ENCODE measurements at regions of chr5 and their contacts with region 1.

Region 1: DNA sequence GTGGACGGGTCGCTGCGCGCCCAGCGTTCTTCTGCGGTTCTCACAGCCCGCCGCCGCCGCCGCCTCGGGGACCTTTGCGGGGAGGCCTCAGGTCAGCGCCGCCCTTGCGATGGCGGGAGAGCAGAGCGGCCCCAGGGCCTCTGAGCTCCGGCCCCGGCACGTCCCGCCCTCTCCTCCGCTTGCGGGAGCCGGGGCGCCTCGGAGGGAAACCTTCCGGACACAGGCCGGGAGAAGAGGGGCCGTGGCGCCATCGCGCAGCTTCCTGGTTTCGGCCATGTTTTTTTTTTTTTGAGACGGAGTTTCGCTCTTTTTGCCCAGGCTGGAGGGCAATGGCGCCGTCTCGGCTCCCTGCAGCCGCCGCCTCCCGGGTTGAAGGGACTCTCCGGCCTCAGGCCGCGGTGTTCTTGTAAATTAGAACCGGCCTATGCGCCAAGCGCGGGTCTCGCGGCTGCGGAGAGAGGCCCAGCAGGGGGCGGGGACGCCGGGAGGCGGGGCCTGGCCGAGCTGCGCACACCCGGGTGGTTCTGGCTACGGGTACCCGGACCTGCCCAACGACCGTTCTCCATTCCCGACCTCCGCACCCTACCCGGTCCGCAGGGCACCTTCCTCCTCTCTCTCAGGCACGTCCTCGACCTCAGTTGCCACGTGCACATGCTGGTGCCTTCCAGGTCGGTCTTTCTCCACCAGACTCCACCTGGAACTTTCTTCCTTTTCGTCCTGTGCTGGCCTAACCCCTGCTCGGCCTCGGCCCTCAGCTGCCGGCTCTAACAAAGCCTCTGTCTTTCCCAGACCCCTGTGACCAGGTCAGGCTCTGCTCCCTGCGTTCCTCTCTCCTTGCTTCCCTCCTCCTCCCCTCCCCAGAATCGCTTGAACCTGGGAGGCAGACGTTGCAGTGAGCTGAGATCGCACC is 28.8 kb upstream of the MGAT1 start:
- DNase-seq: peak; percentile 75
- H3K4me3 Mint-ChIP-seq: peak overlapping the region; percentile 92
- H3K27ac Mint-ChIP-seq: peak overlapping the region; percentile 96
- H3K4me1 Mint-ChIP-seq: peaks cover 40% of the 10 kb centered on the region
- H3K27me3 Mint-ChIP-seq: no peaks in the 10 kb centered on the region

Region 2: DNA sequence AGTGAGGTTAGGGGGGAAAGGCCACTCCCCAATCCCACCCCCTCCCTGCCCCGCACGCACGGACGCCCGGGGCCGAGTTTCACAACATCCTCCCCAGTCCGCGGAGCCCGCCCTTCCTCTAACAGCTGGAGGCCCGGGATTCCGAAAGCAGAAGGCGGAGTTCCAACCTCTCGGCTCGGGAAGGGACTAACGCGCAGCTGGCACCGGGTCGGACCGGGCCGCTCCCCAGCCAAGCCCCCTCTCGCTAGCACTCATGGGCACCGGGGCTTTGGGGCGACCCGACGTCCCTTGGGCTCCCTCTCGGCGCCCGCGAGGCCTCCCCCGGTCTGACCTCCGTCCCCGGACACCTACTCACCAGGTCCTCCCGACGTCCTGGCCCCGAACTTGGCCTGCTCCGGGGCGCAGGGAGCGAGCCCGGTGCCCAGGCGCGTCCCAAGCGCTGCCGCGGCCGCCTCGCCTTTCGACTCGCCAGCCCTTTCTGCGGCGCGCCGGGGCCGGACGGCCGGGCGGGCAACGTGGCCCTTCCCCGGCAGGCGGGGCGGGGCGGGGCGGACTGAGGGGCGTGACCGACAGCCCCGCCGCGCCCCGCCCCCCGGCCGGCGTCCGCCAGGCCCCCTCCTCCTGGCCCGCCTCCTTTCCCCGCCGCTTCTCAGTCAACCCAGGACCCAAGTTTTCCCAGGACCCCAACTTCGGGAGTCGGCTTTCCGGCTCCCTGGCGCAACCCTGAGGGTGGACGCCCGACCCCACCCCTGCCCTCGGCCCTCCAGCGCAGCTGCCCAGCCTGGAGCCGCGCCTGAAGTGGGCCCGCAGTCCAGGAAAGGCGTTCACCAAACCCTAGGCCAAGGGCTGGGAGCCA is 28.8 kb before region 1 on chr5 and contains the start of gene MGAT1:
- CTCF ChIA-PET with region 1: interaction called, 14 read pairs
- POLR2A ChIA-PET with region 1: interaction called, 3 read pairs
- DNase-seq: peak; percentile 79
- H3K4me3 Mint-ChIP-seq: peak within 1 kb of the TSS; percentile 84
- H3K27ac Mint-ChIP-seq: peak within 1 kb of the TSS; percentile 100
- H3K4me1 Mint-ChIP-seq: peaks cover 81% of the 10 kb centered on the region
- H3K27me3 Mint-ChIP-seq: no peaks in the 10 kb centered on the region
- total RNA-seq, gene MGAT1: 136 to 152 TPM

Region 3: DNA sequence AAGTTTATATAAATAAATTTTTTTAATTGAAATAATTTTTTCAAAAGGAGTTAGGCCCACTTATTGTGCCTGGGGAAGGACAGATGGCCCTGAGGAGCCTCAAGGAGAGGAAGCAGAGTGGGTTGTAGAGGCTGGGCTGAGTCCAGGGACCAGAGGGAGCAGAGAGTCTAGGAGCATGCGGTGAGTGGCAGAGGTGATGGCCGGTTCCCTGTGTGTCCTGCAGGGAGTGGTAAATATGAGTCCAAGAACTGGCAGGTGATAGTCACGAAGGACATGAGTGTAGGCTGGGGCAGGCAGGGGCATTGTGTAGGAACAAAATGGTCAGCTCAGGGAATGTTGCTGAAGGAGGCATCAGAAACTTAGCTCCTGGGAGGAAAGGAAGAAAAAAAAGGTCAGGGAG is 200.3 kb after region 1 on chr5:
- CTCF ChIA-PET with region 1: no interaction called
- POLR2A ChIA-PET with region 1: interaction called, 14 read pairs
- DNase-seq: no peak
- H3K4me3 Mint-ChIP-seq: no peak overlapping the region
- H3K27ac Mint-ChIP-seq: no peak overlapping the region
- H3K4me1 Mint-ChIP-seq: no peaks in the 10 kb centered on the region
- H3K27me3 Mint-ChIP-seq: peaks cover 12% of the 10 kb centered on the region

Region 4: GRCh38 chr5:181069767-181070491 is 238.5 kb after region 1 on chr5:
- CTCF ChIA-PET with region 1: no interaction called
- POLR2A ChIA-PET with region 1: no interaction called
- DNase-seq: no peak
- H3K4me3 Mint-ChIP-seq: no peak overlapping the region
- H3K27ac Mint-ChIP-seq: no peak overlapping the region
- H3K4me1 Mint-ChIP-seq: no peaks in the 10 kb centered on the region
- H3K27me3 Mint-ChIP-seq: peaks cover 22% of the 10 kb centered on the region

Measured in activated CD4-positive, alpha-beta T cell treated with anti-CD3 and anti-CD28 coated beads, Interleukin-2, amount 10 ng/mL, durations not matched to agents 7 days and 5 days (primary cell).